CD4-positive, alpha-beta memory T cell (primary cell): ENCODE measurements at regions of chr6 and their contacts with region 1.

Region 1: DNA sequence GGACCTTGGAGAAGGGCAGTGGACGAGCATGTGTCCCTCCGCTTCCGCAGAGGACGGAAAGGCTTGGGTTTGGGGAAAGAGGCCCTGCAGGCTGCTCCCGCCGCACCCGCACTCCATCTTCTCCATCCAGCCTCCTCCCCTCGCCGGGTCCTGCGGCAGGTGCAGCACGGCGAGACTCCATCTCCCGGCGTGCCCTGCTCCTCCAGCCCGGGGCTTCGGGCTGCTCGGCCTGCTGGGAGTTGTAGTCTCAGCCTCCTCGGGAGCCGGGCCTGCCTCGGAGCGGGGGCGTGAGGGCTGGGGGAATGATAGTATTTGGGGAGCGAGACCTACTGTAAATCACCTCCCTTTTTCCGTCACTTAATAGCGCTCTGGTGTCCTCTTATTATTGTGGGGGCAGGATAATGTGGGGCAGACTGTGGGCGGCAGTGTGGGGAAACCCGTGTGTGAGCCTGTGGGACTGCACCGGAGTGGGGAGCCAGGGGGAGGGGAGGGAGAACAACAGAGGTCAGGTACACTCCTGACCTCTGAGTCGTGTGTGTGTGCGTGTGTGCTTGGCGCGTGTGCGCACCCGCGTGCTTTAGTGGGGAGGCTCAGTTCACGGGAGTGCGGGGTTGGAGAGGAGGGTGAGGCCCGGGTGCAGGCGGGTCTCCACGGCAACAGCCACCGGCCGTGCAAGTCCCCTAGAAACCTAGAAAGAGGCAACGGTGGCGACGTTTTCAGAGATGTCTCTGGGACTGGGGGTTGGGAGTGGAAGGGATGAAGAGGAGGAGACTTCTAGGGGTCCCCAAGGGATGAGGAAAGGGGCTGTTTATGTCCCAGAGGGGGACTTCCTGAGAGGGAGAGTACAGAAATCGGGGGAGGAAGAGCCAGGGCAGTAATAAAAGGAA is 4.1 kb downstream of the TTBK1 start:
- DNase-seq: peak; percentile 77 to 85 (median 80)
- H3K4me3 ChIP-seq: peak overlapping the region; percentile 70 to 82
- H3K4me3 Mint-ChIP-seq: peak overlapping the region in 7 of 8 donors; percentile 85 to 90 (median 90)
- H3K27ac ChIP-seq: peak overlapping the region; percentile 52
- H3K27ac Mint-ChIP-seq: peak overlapping the region; percentile 86 to 97 (median 93)
- H3K4me1 ChIP-seq: peaks cover 12% of the 10 kb centered on the region
- H3K4me1 Mint-ChIP-seq: peaks cover 8 to 23% (median 13%) of the 10 kb centered on the region in 4 donors
- H3K27me3 ChIP-seq: peaks cover 25% of the 10 kb centered on the region
- H3K27me3 Mint-ChIP-seq: peaks cover 6 to 15% of the 10 kb centered on the region in 2 donors

Region 2: DNA sequence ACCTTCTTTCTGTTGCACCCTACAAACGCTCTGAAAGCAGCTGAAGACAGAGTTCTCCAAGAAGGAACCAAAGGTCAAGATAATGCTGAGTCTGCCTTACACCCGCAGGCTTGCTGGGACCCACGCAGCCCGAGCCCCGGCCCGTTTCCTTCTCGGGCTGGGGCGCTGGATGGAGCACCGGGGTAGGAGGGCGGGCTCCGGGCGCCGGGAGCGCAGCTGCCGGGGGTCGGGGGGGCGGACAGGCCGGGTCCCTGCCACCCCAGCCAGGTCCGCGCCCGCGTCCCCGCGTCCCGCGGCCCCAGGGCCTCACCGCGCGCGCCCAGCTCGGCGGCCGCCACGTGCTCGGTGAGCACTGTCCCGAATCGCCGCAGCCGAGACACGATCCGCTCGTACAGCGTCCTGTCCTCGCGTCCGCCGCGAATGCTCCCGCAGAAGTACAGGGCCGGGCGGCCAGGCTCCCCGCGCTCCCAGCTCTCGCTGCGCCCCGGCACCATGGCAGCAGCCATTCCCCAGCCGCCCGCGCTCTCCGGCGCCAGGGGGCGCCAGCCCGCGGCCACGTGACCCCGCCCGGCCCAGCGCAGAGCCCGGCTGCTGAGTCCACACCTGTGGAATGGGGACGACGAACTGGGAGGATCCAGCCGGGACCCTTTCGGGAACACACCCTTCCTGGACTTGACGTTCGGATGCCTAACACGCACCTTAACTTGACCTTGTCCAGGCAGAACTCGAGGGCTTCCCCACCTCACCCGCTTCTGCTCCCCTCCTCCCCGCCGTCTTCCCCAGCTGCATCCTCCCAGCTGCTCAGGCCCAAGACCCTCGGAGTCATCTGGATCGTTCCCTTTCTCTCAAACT is 18.2 kb before region 1 on chr6 and contains the start of gene DNPH1:
- CTCF ChIA-PET with region 1: interaction called, 30 read pairs
- POLR2A ChIA-PET with region 1: interaction called, 12 read pairs
- intact Hi-C with region 1: loop called (anchors 2 kb)
- DNase-seq: peak; percentile 71 to 84 (median 79)
- H3K4me3 ChIP-seq: peak within 1 kb of the TSS; percentile 11 to 69
- H3K4me3 Mint-ChIP-seq: peak within 1 kb of the TSS; percentile 88 to 96 (median 92)
- H3K27ac ChIP-seq: peak within 1 kb of the TSS; percentile 63
- H3K27ac Mint-ChIP-seq: peak within 1 kb of the TSS; percentile 94 to 97 (median 95)
- H3K4me1 ChIP-seq: peaks cover 49% of the 10 kb centered on the region
- H3K4me1 Mint-ChIP-seq: peaks cover 26 to 48% (median 34%) of the 10 kb centered on the region in 4 donors
- H3K27me3 ChIP-seq: no peaks in the 10 kb centered on the region
- H3K27me3 Mint-ChIP-seq: peaks cover 3 to 4% of the 10 kb centered on the region in 2 donors
- total RNA-seq, gene DNPH1: 32.8 to 34.8 TPM

Region 3: GRCh38 chr6:43516697-43517504 is 269.5 kb after region 1 on chr6 and contains the starts of genes POLR1C and YIPF3:
- CTCF ChIA-PET with region 1: no interaction called
- POLR2A ChIA-PET with region 1: interaction called, 8 read pairs
- intact Hi-C with region 1: loop called (anchors 10 kb)
- DNase-seq: peak; percentile 91 to 97 (median 96)
- H3K4me3 ChIP-seq: peak within 1 kb of the TSS; percentile 91 to 99
- H3K4me3 Mint-ChIP-seq: no peak within 1 kb of the TSS
- H3K27ac ChIP-seq: peak within 1 kb of the TSS; percentile 92
- H3K27ac Mint-ChIP-seq: no peak within 1 kb of the TSS
- H3K4me1 ChIP-seq: peaks cover 44% of the 10 kb centered on the region
- H3K4me1 Mint-ChIP-seq: peaks cover 10 to 36% (median 24%) of the 10 kb centered on the region in 4 donors
- H3K27me3 ChIP-seq: no peaks in the 10 kb centered on the region
- H3K27me3 Mint-ChIP-seq: no peaks in the 10 kb centered on the region
- total RNA-seq, gene POLR1C: 42.5 to 47.7 TPM
- total RNA-seq, gene YIPF3: 74.8 to 82.9 TPM